ENCODE measurements at regions of chr10 and their contacts with region 1.

Region 1: DNA sequence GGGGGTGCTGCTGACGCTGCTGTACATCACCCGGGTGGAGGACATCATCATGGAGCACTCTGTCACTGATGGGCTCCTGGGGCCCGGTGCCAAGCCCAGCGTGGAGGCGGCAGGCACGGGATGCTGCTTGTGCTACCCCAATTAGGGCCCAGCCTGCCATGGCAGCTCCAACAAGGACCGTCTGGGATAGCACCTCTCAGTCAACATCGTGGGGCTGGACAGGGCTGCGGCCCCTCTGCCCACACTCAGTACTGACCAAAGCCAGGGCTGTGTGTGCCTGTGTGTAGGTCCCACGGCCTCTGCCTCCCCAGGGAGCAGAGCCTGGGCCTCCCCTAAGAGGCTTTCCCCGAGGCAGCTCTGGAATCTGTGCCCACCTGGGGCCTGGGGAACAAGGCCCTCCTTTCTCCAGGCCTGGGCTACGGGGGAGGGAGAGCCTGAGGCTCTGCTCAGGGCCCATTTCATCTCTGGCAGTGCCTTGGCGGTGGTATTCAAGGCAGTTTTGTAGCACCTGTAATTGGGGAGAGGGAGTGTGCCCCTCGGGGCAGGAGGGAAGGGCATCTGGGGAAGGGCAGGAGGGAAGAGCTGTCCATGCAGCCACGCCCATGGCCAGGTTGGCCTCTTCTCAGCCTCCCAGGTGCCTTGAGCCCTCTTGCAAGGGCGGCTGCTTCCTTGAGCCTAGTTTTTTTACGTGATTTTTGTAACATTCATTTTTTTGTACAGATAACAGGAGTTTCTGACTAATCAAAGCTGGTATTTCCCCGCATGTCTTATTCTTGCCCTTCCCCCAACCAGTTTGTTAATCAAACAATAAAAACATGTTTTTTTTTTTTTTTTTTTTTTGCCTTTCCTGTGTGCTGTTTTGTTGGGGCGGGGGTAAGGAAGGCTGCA is 55.8 kb downstream of the TSPAN15 start:
- ATAC-seq: peak in 2 of 8 experiments; percentile 15 to 24
- H3K4me3 ChIP-seq: no peak overlapping the region
- H3K27ac ChIP-seq: no peak overlapping the region
- H3K4me1 ChIP-seq: no peaks in the 10 kb centered on the region

Region 2: GRCh38 chr10:69425511-69426298 is 81.4 kb before region 1 on chr10:
- in situ Hi-C with region 1: loop called in 2 of 9 experiments (anchors 5 to 10 kb)
- ATAC-seq: no peak
- H3K4me3 ChIP-seq: no peak overlapping the region
- H3K27ac ChIP-seq: no peak overlapping the region
- H3K4me1 ChIP-seq: no peaks in the 10 kb centered on the region

Region 3: DNA sequence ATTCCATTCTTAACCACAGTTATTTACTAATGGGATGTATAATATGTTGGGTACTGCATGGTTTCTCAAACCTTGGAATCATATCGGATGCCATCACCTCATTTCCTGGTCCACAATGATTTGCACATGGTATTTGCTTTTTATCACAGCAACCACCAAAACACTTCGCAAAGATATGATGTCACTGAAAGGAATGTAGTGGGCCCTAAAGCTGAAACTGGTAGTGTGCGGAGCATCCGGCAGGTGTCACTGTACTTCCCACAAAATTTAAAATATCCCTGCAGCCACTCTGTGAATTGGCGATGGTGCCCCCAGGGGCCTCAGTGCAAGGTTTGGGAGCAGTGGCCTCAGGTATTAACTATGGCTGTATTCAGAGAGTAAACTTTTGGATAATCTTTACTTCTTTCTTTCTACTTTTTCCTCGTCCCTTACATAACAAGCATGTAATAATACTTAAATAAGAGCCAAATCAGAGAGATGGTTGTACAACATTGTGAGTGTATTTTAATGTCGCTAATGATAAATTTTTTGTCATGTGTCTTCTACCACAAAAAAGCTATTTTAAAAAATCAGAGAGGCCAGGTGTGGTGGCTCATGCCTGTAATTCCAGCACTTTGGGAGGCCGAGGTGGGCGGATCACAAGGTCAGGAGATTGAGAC is 189.1 kb after region 1 on chr10:
- in situ Hi-C with region 1: no loop called
- ATAC-seq: peak in 5 of 8 experiments; percentile 41 to 98 (median 98)
- H3K4me3 ChIP-seq: no peak overlapping the region
- H3K27ac ChIP-seq: no peak overlapping the region
- H3K4me1 ChIP-seq: peaks cover 0 to 6% of the 10 kb centered on the region in 2 donors